Activated naive CD4-positive, alpha-beta T cell treated with anti-CD3 and anti-CD28 coated beads for 36 hours (primary cell): ENCODE measurements at regions of chr17 and their contacts with region 1.

Region 1: GRCh38 chr17:4733073-4733531 is 1.9 kb downstream of the MED11 start:
- DNase-seq: peak; percentile 39
- H3K4me3 Mint-ChIP-seq: no peak overlapping the region
- H3K27ac Mint-ChIP-seq: no peak overlapping the region
- H3K4me1 Mint-ChIP-seq: peaks cover 32% of the 10 kb centered on the region
- H3K27me3 Mint-ChIP-seq: peaks cover 1% of the 10 kb centered on the region

Region 2: DNA sequence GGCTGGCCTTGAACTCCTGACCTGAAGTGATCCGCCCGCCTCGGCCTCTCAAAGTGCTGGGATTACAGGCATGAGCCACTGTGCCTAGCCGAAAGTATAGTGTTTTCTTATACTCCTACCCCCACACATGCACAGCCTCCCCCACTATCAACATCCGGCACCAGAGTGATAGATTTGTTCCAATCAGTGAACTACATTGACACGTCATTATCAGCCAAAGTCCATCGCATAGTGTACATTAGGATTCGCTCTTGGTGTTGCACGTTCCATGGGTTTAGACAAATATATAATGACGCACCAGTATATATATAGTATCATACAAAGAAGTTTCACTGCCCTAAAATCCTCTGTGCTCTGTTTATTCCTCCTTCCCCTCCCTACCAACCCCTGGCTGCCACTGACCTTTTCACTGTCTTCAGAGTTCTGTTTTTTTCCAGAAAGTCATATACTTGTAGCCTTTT is 26.7 kb after region 1 on chr17:
- CTCF ChIA-PET with region 1: no interaction called
- intact Hi-C with region 1: no loop called
- DNase-seq: no peak
- H3K4me3 Mint-ChIP-seq: no peak overlapping the region
- H3K27ac Mint-ChIP-seq: no peak overlapping the region
- H3K4me1 Mint-ChIP-seq: no peaks in the 10 kb centered on the region
- H3K27me3 Mint-ChIP-seq: peaks cover 3% of the 10 kb centered on the region

Region 3: GRCh38 chr17:4881761-4882555 is 148.9 kb after region 1 on chr17:
- CTCF ChIA-PET with region 1: interaction called, 3 read pairs
- intact Hi-C with region 1: loop called (anchors 1 kb)
- DNase-seq: peak; percentile 79
- H3K4me3 Mint-ChIP-seq: no peak overlapping the region
- H3K27ac Mint-ChIP-seq: no peak overlapping the region
- H3K4me1 Mint-ChIP-seq: no peaks in the 10 kb centered on the region
- H3K27me3 Mint-ChIP-seq: no peaks in the 10 kb centered on the region

Region 4: GRCh38 chr17:4891411-4892342 is 158.6 kb after region 1 on chr17:
- CTCF ChIA-PET with region 1: interaction called, 5 read pairs
- intact Hi-C with region 1: loop called (anchors 2 kb)
- DNase-seq: no peak
- H3K4me3 Mint-ChIP-seq: no peak overlapping the region
- H3K27ac Mint-ChIP-seq: no peak overlapping the region
- H3K4me1 Mint-ChIP-seq: no peaks in the 10 kb centered on the region
- H3K27me3 Mint-ChIP-seq: no peaks in the 10 kb centered on the region

Region 5: DNA sequence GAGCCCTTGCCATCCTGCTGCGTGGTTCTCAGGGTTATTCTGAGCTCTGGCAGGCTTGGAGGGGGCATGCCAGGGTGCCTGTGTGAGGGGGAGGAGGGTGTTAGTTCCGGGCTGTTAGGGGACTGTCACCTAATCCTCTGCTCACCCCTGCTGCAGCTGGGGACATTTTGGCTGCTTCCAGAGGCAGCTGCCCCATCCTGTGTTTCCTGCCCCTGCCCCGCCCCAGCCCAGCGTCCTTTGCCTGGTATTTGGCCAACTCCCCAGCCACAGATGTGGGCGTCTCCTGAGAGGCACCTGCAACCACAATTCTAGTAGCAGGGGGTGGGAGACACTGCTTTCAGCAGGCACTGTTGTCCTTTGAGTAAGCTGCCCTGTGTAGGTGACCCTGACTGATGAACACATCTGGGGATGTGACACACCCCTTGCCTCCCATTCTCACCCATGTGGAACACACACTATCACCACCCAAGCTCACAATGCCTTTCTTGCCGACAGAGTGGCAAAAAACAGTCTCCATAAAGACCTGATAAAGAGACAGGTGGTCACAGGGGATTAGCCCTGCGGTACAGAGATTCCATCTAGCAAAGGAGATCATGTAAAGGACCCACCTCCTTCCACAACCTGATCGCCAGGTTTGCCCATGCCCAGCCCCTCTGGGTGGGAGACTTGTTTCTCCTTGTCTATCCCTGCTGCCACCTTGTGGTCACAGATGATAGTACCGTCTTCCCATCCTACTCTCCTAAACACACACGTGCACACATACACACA is 170.1 kb after region 1 on chr17 and contains the start of gene CHRNE:
- CTCF ChIA-PET with region 1: interaction called, 3 read pairs
- intact Hi-C with region 1: loop called (anchors 2 kb)
- DNase-seq: peak; percentile 91
- H3K4me3 Mint-ChIP-seq: peak within 1 kb of the TSS; percentile 1
- H3K27ac Mint-ChIP-seq: peak within 1 kb of the TSS; percentile 48
- H3K4me1 Mint-ChIP-seq: peaks cover 32% of the 10 kb centered on the region
- H3K27me3 Mint-ChIP-seq: no peaks in the 10 kb centered on the region
- total RNA-seq, gene CHRNE: 0.22 to 0.38 TPM